WTC11 (cell line): ENCODE measurements at regions of chr10 and their contacts with region 1.

Region 1: DNA sequence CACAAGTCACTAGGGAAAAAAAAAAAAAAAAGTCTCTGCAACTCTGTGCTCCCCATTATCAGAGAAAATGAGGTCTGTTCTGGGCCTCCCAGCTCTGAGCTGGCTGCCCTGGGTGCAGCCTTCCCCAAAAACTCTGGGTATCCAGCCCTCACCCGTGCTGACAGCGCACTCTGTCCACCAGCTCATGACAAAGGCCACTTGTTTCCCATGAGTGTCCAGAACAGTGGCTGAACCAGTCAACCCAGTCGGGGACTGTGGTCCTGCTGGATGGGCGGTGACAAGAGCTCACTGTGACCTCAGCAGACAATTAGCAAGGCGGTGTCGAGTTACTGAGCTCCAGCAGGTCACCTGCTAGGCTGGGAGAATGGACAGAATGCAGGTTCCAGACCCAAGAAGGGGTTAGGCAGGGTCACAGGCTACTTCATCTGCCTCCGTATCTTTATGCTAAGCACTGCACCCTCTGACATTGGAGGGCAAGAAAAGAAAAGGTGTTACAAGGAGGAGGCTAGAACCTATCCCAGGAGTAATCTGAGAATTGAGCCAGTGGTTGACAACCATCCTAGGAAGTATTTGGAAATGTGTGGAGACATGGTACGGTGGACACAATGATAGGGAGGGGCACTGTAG is 37.2 kb downstream of the DLG5 start:
- DNase-seq: peak; percentile 69
- ATAC-seq: peak; percentile 73
- H3K4me3 Mint-ChIP-seq: peak overlapping the region; percentile 46
- H3K27ac Mint-ChIP-seq: peak overlapping the region; percentile 97
- H3K4me1 Mint-ChIP-seq: peaks cover 93% of the 10 kb centered on the region
- H3K27me3 Mint-ChIP-seq: no peaks in the 10 kb centered on the region
- CTCF ChIP-seq: no peak

Region 2: GRCh38 chr10:77846718-77847630 is 42.4 kb before region 1 on chr10:
- CTCF ChIA-PET with region 1: interaction called, 95 read pairs
- POLR2A ChIA-PET with region 1: no interaction called
- DNase-seq: peak; percentile 86
- ATAC-seq: peak; percentile 60
- H3K4me3 Mint-ChIP-seq: no peak overlapping the region
- H3K27ac Mint-ChIP-seq: peak overlapping the region; percentile 84
- H3K4me1 Mint-ChIP-seq: peaks cover 64% of the 10 kb centered on the region
- H3K27me3 Mint-ChIP-seq: no peaks in the 10 kb centered on the region
- CTCF ChIP-seq: peak; percentile 96

Region 3: GRCh38 chr10:77873536-77874380 is 15.6 kb before region 1 on chr10:
- CTCF ChIA-PET with region 1: interaction called, 82 read pairs
- POLR2A ChIA-PET with region 1: interaction called, 8 read pairs
- DNase-seq: no peak
- ATAC-seq: no peak
- H3K4me3 Mint-ChIP-seq: no peak overlapping the region
- H3K27ac Mint-ChIP-seq: peak overlapping the region; percentile 90
- H3K4me1 Mint-ChIP-seq: peaks cover 69% of the 10 kb centered on the region
- H3K27me3 Mint-ChIP-seq: no peaks in the 10 kb centered on the region
- CTCF ChIP-seq: no peak

Region 4: GRCh38 chr10:77926566-77927401 is 37.4 kb after region 1 on chr10 and contains the start of gene DLG5:
- CTCF ChIA-PET with region 1: interaction called, 48 read pairs
- POLR2A ChIA-PET with region 1: interaction called, 3 read pairs
- DNase-seq: peak; percentile 44
- ATAC-seq: peak; percentile 38
- H3K4me3 Mint-ChIP-seq: peak within 1 kb of the TSS; percentile 69
- H3K27ac Mint-ChIP-seq: peak within 1 kb of the TSS; percentile 40; the same call in 1 of the 2 replicates
- H3K4me1 Mint-ChIP-seq: peaks cover 42% of the 10 kb centered on the region
- H3K27me3 Mint-ChIP-seq: peaks cover 8% of the 10 kb centered on the region
- CTCF ChIP-seq: no peak
- total RNA-seq, gene DLG5: 58.1 to 65.5 TPM (median 59.1 TPM) in 3 replicates

Region 5: GRCh38 chr10:77949167-77949566 is 59.8 kb after region 1 on chr10:
- CTCF ChIA-PET with region 1: interaction called, 23 read pairs
- POLR2A ChIA-PET with region 1: no interaction called
- DNase-seq: peak; percentile 84
- ATAC-seq: peak; percentile 98
- H3K4me3 Mint-ChIP-seq: peak overlapping the region; percentile 30
- H3K27ac Mint-ChIP-seq: peak overlapping the region; percentile 97
- H3K4me1 Mint-ChIP-seq: peaks cover 14% of the 10 kb centered on the region
- H3K27me3 Mint-ChIP-seq: 0 out of 2 replicates have a peak, but pooled peaks cover 3% of the 10 kb centered on the region
- CTCF ChIP-seq: no peak

Region 6: DNA sequence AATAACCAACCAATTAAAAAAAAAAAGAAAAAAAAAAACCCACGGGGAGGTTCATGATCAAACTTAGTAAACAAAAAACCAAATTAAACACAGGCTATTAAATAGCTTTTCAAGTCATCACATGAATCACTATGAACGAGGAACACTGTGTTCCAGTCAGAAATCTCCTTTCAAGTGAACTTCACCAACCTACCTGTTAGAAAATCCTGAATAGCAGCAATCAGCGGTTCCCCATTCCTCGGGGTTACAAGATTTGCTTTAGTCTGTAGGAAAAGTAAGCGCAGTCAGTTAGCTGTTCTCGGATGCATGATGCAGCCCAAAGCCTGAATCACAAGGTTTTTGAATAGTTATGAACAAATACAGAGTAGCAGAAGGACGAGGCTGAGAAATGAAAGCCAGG is 120.9 kb after region 1 on chr10:
- CTCF ChIA-PET with region 1: no interaction called
- POLR2A ChIA-PET with region 1: no interaction called
- DNase-seq: no peak
- ATAC-seq: no peak
- H3K4me3 Mint-ChIP-seq: no peak overlapping the region
- H3K27ac Mint-ChIP-seq: no peak overlapping the region
- H3K4me1 Mint-ChIP-seq: no peaks in the 10 kb centered on the region
- H3K27me3 Mint-ChIP-seq: no peaks in the 10 kb centered on the region
- CTCF ChIP-seq: no peak

Region 7: DNA sequence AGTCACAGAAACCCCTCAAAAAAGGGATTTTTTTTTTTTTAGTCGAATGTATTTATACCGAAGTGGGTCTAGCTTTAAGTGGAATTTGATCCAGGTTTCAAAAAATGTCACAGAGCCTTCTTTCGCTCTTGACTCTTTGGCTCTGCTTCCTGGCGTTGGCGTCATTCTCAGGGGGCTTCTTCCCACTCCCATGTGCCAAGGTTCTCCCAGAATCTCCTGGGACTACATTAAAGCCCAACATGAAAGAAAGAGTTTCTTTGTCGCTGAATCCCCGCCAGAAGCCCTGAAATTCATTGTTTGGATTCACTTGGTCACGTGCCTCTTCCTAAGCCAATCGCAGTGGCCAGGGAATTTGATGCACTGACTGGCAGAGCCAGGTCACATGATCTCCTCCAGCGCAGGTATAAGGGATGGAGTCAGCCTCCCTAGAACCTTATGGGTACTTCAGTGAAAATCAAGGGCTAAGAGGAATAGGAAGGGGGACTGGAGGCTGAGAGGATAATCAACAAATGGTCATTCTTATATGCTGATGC is 245.4 kb after region 1 on chr10:
- CTCF ChIA-PET with region 1: no interaction called
- POLR2A ChIA-PET with region 1: no interaction called
- DNase-seq: peak; percentile 17
- ATAC-seq: peak; percentile 69
- H3K4me3 Mint-ChIP-seq: no peak overlapping the region
- H3K27ac Mint-ChIP-seq: no peak overlapping the region
- H3K4me1 Mint-ChIP-seq: peaks cover 27% of the 10 kb centered on the region
- H3K27me3 Mint-ChIP-seq: peaks cover 6% of the 10 kb centered on the region; the same call in 1 of the 2 replicates
- CTCF ChIP-seq: no peak